ENCODE measurements at regions of chr14 and their contacts with region 1.

Region 1: DNA sequence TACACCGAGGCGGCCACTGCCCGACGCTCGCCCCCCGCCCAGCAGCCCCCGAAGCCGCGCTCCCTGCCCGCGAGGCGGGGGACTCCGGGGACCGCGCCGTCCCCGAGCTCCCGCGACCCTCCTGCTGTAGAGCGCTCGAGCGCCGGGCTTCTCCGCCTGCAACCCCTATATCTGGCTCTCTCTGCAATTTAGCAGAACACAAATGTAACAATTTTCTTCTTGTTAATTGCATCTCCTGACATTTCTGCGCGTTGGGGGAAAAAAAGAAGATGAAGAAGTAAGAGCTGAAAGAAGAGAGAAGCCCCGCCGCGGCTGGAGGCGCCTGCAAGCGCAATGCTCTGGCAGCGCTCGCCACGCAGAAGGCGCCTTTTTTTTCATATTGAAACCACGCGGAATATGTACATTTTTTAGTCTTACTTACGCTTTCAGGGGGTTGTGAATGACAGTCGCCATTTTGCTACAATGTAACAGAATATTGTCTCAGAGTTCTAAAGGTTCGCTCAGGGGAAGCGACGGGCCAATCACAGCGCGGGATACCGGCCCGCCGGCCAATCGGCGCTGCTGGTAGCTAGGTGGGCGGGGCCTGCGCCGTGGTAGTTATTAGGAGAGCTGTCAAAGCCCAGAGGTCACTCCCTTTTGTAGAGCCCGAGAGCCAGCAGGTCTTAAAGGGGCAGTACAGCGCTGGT is at the start of gene DPF3:
- DNase-seq: peak; percentile 99
- ATAC-seq: peak; percentile 86
- H3K4me3 ChIP-seq: peak within 1 kb of the TSS; percentile 82
- H3K27ac ChIP-seq: peak within 1 kb of the TSS; percentile 1; the same call in 1 of the 2 replicates
- H3K4me1 ChIP-seq: peaks cover 25% of the 10 kb centered on the region
- H3K27me3 ChIP-seq: no peaks in the 10 kb centered on the region
- CTCF ChIP-seq: no peak
- total RNA-seq, gene DPF3: 16.6 and 30.5 TPM in 2 replicates

Region 2: GRCh38 chr14:72638021-72638420 is 255.8 kb before region 1 on chr14:
- CTCF ChIA-PET with region 1: interaction called, 8 read pairs
- POLR2A ChIA-PET with region 1: interaction called, 4 read pairs
- intact Hi-C with region 1: loop called (anchors 2 kb)
- DNase-seq: peak; percentile 91
- ATAC-seq: peak; percentile 50
- H3K4me3 ChIP-seq: no peak overlapping the region
- H3K27ac ChIP-seq: peak overlapping the region; percentile 90
- H3K4me1 ChIP-seq: peaks cover 51% of the 10 kb centered on the region
- H3K27me3 ChIP-seq: no peaks in the 10 kb centered on the region
- CTCF ChIP-seq: no peak

Region 3: GRCh38 chr14:72736314-72736715 is 157.5 kb before region 1 on chr14:
- CTCF ChIA-PET with region 1: interaction called, 4 read pairs
- POLR2A ChIA-PET with region 1: no interaction called
- intact Hi-C with region 1: loop called (anchors 1 kb)
- DNase-seq: peak; percentile 27
- ATAC-seq: peak; percentile 72
- H3K4me3 ChIP-seq: no peak overlapping the region
- H3K27ac ChIP-seq: no peak overlapping the region
- H3K4me1 ChIP-seq: no peaks in the 10 kb centered on the region
- H3K27me3 ChIP-seq: no peaks in the 10 kb centered on the region
- CTCF ChIP-seq: peak; percentile 47; the same call in 1 of the 2 replicates

Region 4: DNA sequence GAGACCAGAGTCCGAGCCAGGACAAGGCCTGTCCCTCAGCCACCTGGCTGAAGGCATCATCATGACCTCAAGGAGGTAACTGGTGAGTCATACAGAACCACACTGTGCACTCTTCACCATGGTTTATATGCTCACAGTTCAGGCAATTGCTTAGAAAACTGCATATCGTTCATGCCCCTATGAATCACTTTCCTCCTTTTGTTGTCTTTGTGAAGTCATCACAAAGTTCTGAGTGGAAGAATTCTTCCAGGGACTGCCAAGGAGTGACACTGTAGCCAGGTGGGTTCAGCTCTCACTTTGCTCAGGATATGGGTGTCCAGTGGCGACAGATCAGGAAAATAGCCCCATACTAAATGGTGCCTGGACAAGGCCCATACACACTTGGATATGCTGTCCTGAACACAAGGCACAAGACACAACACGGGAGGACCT is 92.4 kb before region 1 on chr14:
- CTCF ChIA-PET with region 1: no interaction called
- POLR2A ChIA-PET with region 1: no interaction called
- intact Hi-C with region 1: loop called (anchors 1 kb)
- DNase-seq: peak; percentile 99
- ATAC-seq: peak; percentile 98
- H3K4me3 ChIP-seq: peak overlapping the region; percentile 9; the same call in 1 of the 2 replicates
- H3K27ac ChIP-seq: peak overlapping the region; percentile 94
- H3K4me1 ChIP-seq: peaks cover 27% of the 10 kb centered on the region
- H3K27me3 ChIP-seq: no peaks in the 10 kb centered on the region
- CTCF ChIP-seq: no peak

Region 5: GRCh38 chr14:72916177-72916576 is 22.4 kb after region 1 on chr14:
- CTCF ChIA-PET with region 1: no interaction called
- POLR2A ChIA-PET with region 1: interaction called, 21 read pairs
- intact Hi-C with region 1: no loop called
- DNase-seq: peak; percentile 85
- ATAC-seq: peak; percentile 97
- H3K4me3 ChIP-seq: no peak overlapping the region
- H3K27ac ChIP-seq: 0 out of 2 replicates have a peak overlapping the region, but pooled peaks have one; percentile 9
- H3K4me1 ChIP-seq: peaks cover 13% of the 10 kb centered on the region
- H3K27me3 ChIP-seq: no peaks in the 10 kb centered on the region
- CTCF ChIP-seq: no peak

Region 6: DNA sequence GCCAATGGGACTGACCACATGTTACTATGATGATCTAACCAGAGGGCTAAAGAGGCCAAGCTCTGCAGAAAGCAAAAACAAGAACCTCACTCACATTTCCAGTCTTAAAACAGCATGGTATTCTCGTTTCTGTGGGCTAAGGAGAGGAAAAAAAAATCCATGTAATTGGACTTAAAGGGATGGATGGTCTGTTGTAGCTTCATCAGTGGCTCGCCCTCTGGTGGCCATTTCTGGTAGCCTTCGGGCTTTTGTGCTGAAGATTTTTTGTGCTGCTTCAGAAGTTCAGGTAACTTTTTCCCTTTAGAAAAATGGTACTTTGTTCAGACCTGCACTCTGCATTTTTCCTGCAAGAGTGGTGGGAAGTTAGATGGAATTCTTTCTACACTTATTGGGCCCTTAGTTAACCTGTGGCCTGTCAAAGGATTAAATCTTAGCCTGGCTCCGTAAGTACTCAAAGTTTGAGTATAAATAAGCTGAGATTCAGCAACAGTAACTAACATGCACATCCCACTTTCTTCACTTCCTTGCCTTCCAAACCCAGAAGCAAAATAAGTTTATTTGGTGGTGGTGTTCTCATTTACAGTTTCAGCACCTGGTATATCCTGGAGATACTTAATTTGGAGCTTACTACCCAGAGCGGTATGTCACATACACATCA is 54.8 kb after region 1 on chr14:
- CTCF ChIA-PET with region 1: interaction called, 8 read pairs
- POLR2A ChIA-PET with region 1: no interaction called
- intact Hi-C with region 1: loop called (anchors 1 kb)
- DNase-seq: peak; percentile 86
- ATAC-seq: peak; percentile 38
- H3K4me3 ChIP-seq: no peak overlapping the region
- H3K27ac ChIP-seq: no peak overlapping the region
- H3K4me1 ChIP-seq: peaks cover 17% of the 10 kb centered on the region
- H3K27me3 ChIP-seq: no peaks in the 10 kb centered on the region
- CTCF ChIP-seq: peak; percentile 99

Measured in PC-3 (cell line).